Left lung (tissue), 14 donors: ENCODE measurements at regions of chr22 and their contacts with region 1.

Region 1: DNA sequence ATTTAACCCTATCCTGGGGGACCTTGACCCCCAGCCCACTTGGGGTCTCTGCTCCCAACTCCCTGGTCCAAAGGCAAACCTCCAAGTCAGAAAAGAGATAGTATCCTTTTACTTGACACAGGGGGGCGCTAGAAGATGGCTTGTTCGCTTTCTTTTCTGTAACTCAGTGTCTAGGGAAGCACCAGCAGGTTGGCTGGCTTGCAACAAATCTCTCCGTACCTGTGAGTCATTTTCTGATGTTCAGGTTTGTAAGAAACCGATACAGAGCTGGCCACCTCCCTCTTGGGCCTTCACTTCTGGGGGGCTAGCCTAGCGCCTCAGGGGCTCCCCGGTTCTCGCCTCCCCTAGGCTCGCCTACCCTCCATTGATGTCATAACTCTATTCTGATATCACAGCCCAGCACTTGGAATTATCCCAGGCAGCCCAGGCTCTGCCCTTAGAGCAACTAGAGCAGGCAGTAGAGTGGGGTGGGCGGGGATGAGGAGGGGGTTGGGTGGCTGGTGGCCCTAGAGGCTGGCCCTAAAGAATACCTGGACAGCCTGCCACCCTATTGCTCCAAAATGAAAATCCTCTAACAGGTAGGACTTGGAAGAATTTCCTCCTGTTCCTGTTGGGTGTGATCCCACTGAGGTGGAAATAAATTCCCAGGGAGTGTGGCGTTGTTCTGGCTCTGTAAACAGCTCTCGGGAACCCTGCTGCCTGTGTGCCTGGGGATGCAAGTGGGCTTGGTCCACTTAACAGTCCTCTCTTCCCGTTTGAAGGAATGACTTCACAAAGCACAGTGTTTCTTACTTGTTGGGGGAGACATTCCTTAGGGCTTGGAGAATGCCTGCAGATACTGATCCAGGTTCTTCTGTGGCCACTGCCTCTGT is 69.4 kb downstream of the OSBP2 start:
- DNase-seq: peak in 2 of 4 donors; percentile 60 to 76
- ATAC-seq: peak; percentile 93
- H3K4me3 ChIP-seq: no peak overlapping the region
- H3K27ac ChIP-seq: no peak overlapping the region
- H3K4me1 ChIP-seq: no peaks in the 10 kb centered on the region
- H3K27me3 ChIP-seq: no peaks in the 10 kb centered on the region
- CTCF ChIP-seq: peak; percentile 23 to 53

Region 2: GRCh38 chr22:30890686-30891442 is 126.8 kb after region 1 on chr22:
- intact Hi-C with region 1: loop called in 1 of 2 experiments (anchors 10 kb)
- DNase-seq: peak in 2 of 4 donors; percentile 32 to 72
- ATAC-seq: peak; percentile 84
- H3K4me3 ChIP-seq: no peak overlapping the region
- H3K27ac ChIP-seq: no peak overlapping the region
- H3K4me1 ChIP-seq: no peaks in the 10 kb centered on the region
- H3K27me3 ChIP-seq: no peaks in the 10 kb centered on the region
- CTCF ChIP-seq: peak; percentile 63 to 76

Region 3: DNA sequence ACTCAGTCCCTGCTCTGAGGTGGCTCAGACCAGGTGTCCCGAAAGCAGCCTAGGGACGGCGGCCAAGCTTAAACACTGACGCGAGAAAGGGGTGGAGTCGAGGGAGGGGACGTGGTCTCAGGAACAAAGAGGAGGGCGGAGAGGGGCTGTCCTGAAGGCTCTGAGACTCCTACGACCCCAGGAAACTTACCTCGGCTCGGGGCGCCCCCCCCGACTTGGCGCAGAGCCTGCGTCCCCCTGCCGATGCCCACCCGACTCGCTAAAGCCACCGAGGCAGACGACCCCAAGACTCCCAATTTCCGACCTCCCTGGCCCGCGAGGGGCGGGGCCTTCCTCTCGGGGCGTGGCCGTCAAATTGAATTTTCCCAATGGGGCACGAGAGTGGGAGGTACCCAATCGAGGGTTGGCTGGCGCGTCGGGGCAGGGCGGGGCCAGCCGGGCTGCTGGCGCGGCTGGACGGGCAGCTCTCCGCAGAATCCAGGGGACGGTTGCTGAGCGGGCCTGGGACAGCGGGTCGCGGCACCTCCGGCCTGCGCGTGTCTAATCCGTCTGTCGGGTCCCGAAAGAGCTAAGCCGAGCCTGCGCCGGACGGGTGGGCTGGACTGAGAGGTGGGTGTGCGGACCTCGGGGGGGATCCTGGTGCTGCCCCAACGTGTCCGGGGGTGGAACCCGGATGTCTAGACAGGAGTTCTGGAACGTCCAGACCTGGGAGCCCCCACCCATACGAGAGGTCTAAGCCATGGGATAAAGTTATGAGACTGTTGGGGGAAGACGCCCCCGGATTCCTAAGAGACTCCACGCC is 317.0 kb after region 1 on chr22 and contains the start of gene SMTN:
- intact Hi-C with region 1: loop called in 1 of 2 experiments (anchors 10 kb)
- DNase-seq: peak; percentile 93 to 97 (median 96)
- ATAC-seq: peak; percentile 84
- H3K4me3 ChIP-seq: peak within 1 kb of the TSS; percentile 66 to 77
- H3K27ac ChIP-seq: peak within 1 kb of the TSS; percentile 90 to 95
- H3K4me1 ChIP-seq: peaks cover 18 to 56% of the 10 kb centered on the region in 2 donors
- H3K27me3 ChIP-seq: no peaks in the 10 kb centered on the region
- CTCF ChIP-seq: no peak
- polyA plus RNA-seq, gene SMTN: 71.0 to 98.7 (median 82.1) TPM